ENCODE measurements at regions of chr4 and their contacts with region 1.

Region 1: DNA sequence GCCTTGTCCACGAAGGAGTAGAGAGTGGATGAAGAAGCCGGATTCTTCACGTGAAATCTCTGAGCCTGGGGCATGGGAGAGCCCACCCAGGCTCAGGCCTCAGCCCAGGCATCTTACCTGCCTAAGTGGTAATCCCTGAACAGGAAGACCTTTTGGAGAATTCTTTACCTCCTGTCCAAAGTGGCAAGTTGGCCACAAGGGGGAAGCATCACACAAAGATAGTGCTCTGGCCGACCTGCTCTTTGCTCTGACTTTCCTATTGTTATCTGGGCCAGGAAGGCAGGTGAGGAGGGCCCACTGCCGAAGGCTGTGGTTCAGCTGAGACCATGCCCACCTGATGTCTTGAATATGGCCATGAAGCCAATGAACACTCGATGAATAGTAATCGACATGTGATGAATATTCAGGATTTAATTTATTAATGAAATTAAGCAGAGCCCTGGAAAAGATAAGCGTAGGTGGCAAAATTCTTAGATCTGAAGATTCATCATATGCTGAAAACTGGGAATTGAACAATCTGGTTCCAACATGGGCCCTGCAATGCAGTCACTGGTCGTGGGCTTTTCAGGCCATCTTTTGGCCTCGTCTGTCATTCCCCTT is 93.8 kb downstream of the PDGFRA start:
- DNase-seq: peak; percentile 82
- H3K4me3 ChIP-seq: peak overlapping the region in 1 of 2 experiments; percentile 25; a peak in 1 of 4 replicates
- H3K27ac ChIP-seq: no peak overlapping the region
- H3K4me1 ChIP-seq: peaks cover 0 to 2% of the 10 kb centered on the region in 2 experiments; a peak in 1 of 4 replicates
- H3K27me3 ChIP-seq: no peaks in the 10 kb centered on the region
- CTCF ChIP-seq: peak; percentile 81
- EP300 ChIP-seq: no peak
- RAD21 ChIP-seq: peak; percentile 95

Region 2: DNA sequence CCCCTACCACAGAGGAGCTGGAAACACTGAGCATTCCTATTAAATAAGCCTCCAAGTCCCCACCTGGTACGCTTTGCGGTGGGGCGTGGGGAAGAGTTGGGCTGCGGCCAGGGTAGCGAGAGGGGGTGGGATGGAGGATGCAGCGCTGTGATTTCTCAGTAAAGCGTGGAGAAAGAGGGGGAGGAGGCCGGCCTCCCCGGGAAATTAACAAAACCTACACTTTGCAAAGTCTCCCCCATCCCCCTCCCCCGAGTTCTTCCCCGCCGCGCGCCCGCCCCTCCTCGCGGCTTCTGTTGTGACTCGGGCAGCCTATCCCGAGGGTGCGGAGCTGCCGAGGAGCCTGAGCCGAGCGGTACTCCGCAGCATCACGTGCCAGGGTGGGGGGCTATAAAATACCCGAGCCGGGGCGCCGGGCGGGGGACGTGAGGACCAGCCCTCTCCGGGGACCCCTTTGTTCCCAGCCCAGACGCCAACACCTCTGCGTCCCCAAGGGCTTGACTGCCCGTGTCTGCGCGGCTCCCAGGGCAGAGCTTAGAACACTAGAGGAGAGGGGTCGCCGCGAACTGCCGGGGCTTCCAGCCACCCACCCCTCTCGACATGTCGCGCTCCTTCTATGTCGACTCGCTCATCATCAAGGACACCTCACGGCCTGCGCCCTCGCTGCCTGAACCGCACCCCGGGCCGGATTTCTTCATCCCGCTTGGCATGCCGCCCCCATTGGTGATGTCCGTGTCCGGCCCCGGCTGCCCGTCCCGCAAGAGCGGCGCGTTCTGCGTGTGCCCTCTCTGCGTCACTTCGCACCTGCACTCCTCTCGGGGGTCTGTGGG is 223.0 kb before region 1 on chr4 and contains the start of gene GSX2:
- CTCF ChIA-PET with region 1: no interaction called
- POLR2A ChIA-PET with region 1: no interaction called
- DNase-seq: peak; percentile 73
- H3K4me3 ChIP-seq: peak within 1 kb of the TSS; percentile 51 to 68
- H3K27ac ChIP-seq: no peak within 1 kb of the TSS
- H3K4me1 ChIP-seq: peaks cover 0 to 22% of the 10 kb centered on the region in 2 experiments; a peak in 1 of 4 replicates
- H3K27me3 ChIP-seq: peaks cover 57% of the 10 kb centered on the region
- CTCF ChIP-seq: no peak
- EP300 ChIP-seq: no peak
- RAD21 ChIP-seq: no peak
- polyA plus RNA-seq, gene GSX2: 0.02 and 0.41 TPM in 2 replicates

Region 3: GRCh38 chr4:54440394-54441136 is 117.6 kb after region 1 on chr4:
- CTCF ChIA-PET with region 1: interaction called, 17 read pairs
- POLR2A ChIA-PET with region 1: no interaction called
- DNase-seq: peak; percentile 42
- H3K4me3 ChIP-seq: peak overlapping the region; percentile 3 to 25; a peak in 2 of 4 replicates
- H3K27ac ChIP-seq: no peak overlapping the region
- H3K4me1 ChIP-seq: no peaks in the 10 kb centered on the region; a peak in 2 of 4 replicates
- H3K27me3 ChIP-seq: peaks cover 4% of the 10 kb centered on the region; the same call in 1 of the 2 replicates
- CTCF ChIP-seq: peak; percentile 55
- EP300 ChIP-seq: no peak
- RAD21 ChIP-seq: peak; percentile 70

Region 4: DNA sequence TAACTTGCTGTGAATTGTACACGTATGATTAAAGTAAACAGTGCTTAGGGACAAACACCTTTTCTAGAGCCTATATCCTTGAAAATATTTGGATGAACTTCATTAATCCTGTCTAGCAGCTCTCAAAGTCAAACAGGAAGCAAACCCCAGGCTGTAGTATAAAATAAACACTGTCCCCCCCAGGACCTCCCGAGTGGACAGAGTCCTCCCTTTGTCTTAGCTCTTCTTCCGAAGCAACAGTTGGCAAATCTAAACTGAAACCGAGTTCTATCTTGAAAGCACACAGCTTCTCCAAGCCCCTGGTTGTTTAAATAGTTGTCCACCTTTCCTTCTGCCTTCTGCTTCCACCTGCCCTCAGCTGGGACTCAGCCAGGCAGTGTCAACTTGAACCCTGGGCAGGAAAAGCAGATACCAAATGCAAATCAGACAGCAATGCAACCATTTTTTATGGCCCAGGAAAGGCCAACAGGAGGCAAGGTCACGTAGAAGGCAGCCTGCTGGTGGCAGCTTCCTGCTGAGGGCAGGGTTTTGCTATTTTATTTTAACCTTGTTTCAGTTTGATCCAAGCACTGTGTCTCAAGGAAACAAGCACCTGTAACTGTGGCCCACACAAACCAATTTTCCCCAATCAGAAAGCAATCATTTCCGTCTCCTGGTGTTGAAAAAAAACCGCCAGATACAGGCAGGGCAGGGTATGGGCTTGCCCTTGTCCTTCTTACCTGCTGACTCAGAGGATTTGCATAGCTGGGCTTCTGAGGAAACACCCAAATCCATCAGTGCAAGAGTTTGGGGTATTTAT is 224.6 kb after region 1 on chr4:
- CTCF ChIA-PET with region 1: no interaction called
- POLR2A ChIA-PET with region 1: no interaction called
- DNase-seq: no peak
- H3K4me3 ChIP-seq: no peak overlapping the region
- H3K27ac ChIP-seq: no peak overlapping the region
- H3K4me1 ChIP-seq: peaks cover 3 to 4% of the 10 kb centered on the region in 2 experiments; a peak in 1 of 4 replicates
- H3K27me3 ChIP-seq: no peaks in the 10 kb centered on the region
- CTCF ChIP-seq: no peak
- EP300 ChIP-seq: no peak
- RAD21 ChIP-seq: no peak

Region 5: GRCh38 chr4:54596201-54596600 is 273.3 kb after region 1 on chr4:
- CTCF ChIA-PET with region 1: no interaction called
- POLR2A ChIA-PET with region 1: no interaction called
- DNase-seq: no peak
- H3K4me3 ChIP-seq: no peak overlapping the region
- H3K27ac ChIP-seq: no peak overlapping the region
- H3K4me1 ChIP-seq: no peaks in the 10 kb centered on the region
- H3K27me3 ChIP-seq: no peaks in the 10 kb centered on the region
- CTCF ChIP-seq: no peak
- EP300 ChIP-seq: no peak
- RAD21 ChIP-seq: no peak

Measured in SK-N-SH (cell line).